Activated T-helper 1 cell treated with anti-CD3 and anti-CD28 coated beads, Interleukin-12 subunit alpha, Interleukin-12 subunit beta, Interleukin-2, Interleukin-4 antibody, amounts not matched to agents 30 ng/mL and 10 ng/mL and 1 ng/mL, durations not matched to agents 14 hours and 24 hours and 36 hours (primary cell): ENCODE measurements at regions of chr14 and their contacts with region 1.

Region 1: DNA sequence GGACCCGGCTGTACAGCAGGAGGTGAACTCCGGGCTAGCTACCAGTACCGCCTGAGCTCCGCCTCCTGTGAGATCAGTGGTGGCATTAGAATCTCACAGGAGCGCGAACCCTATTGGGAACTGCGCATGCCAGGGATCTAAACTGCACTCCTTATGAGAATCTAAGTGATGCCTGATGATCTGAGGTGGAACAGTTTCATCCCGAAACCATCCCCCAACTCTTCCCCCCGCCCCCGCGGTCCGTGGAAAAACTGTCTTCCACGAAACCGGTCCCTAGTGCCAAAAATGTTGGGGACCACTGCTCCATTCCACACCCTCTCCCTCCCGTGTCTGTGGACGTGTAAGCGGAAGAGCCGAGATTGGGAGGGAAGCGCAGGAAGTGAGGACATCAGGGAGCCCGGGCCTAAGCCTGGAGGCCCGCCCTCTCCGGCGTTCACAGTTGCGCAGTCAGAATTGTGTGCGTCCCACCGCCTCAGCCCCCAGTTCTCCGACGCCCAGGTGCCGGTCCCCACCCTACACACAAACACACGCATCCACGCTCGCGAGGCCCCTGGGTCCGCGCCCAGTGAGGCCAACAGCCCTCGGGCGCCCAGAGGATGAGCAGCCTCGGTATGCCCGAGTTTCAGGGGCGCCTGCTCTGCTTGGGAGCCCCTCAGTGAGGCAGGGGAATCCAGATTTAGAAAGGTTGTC is 1.8 kb upstream of the RNASE4 start:
- DNase-seq: peak; percentile 65
- H3K4me3 Mint-ChIP-seq: no peak overlapping the region
- H3K27ac Mint-ChIP-seq: no peak overlapping the region
- H3K4me1 Mint-ChIP-seq: peaks cover 10% of the 10 kb centered on the region
- H3K27me3 Mint-ChIP-seq: no peaks in the 10 kb centered on the region

Region 2: GRCh38 chr14:20332788-20333493 is 349.6 kb before region 1 on chr14 and contains the start of gene CCNB1IP1:
- intact Hi-C with region 1: loop called (anchors 2 kb)
- DNase-seq: peak; percentile 62
- H3K4me3 Mint-ChIP-seq: peak within 1 kb of the TSS; percentile 98
- H3K27ac Mint-ChIP-seq: peak within 1 kb of the TSS; percentile 91
- H3K4me1 Mint-ChIP-seq: peaks cover 59% of the 10 kb centered on the region
- H3K27me3 Mint-ChIP-seq: peaks cover 5% of the 10 kb centered on the region
- total RNA-seq, gene CCNB1IP1: 61.2 and 72.5 TPM in 2 replicates

Region 3: DNA sequence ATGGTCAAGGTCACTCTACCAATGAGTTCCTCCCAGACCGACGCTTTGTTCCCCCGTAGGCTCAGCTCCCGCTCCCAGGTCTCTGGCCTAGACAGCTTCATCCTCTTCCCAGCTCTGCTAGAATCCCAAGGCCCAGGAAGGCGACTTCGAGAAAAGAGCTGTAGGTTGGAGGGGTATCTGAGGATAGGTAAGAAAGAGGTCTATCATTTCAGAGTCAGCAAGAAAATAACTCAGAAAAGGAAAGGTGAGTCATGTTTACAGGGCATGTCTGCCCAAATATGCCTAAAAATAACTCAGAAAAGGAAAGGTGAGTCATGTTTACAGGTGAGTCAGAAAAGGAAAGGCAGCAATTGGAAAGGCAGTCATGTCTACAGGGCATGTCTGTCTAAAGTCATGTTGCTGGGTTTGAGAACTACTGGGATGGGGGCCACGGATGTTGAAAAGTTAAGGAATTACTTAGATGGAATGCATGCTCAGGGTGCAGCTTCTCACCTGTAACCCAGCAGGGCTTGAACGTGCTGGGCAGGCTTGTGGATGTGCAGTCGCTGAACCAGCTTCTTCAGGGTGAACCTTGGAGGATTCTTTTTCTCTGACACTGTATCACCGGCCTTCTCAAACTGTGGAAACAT is 281.5 kb before region 1 on chr14:
- intact Hi-C with region 1: loop called (anchors 1 kb)
- DNase-seq: no peak
- H3K4me3 Mint-ChIP-seq: peak overlapping the region; percentile 53
- H3K27ac Mint-ChIP-seq: peak overlapping the region; percentile 86
- H3K4me1 Mint-ChIP-seq: peaks cover 30% of the 10 kb centered on the region
- H3K27me3 Mint-ChIP-seq: no peaks in the 10 kb centered on the region

Region 4: GRCh38 chr14:20454516-20455354 is 227.8 kb before region 1 on chr14 and contains the starts of genes APEX1 and OSGEP:
- intact Hi-C with region 1: loop called (anchors 2 kb)
- DNase-seq: peak; percentile 97
- H3K4me3 Mint-ChIP-seq: peak within 1 kb of the TSS; percentile 53
- H3K27ac Mint-ChIP-seq: no peak within 1 kb of the TSS
- H3K4me1 Mint-ChIP-seq: peaks cover 11% of the 10 kb centered on the region
- H3K27me3 Mint-ChIP-seq: no peaks in the 10 kb centered on the region
- total RNA-seq, gene APEX1: 236 and 242 TPM in 2 replicates
- total RNA-seq, gene OSGEP: 69.6 and 77.4 TPM in 2 replicates

Region 5: DNA sequence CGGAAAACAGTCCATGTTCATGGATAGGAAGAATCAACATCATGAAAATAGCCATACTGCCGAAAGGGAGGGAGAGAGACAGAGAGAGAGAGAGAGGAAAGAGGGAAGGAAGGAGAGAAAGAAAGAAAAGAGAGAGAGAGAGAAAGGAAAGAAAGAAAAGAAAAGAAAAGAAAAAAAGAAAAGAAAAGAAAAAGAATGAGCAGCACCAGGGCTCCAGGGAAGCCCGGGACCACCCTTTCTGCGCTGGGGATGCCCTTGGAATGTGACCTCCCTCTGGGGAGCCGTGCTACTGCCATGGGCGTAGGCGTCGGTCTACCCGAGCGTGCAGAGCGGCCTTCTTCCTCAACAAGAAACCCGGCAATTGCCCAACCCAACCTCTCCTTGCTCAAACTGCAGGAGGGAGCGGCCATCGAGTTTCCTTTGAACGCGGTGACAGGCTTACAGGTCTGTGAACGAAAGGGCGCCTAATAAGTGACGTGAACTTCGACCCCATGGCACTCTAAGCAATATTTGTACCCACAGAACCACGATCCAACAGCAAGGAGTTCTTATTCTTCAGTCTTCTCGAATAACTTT is 58.0 kb before region 1 on chr14:
- intact Hi-C with region 1: loop called (anchors 1 kb)
- DNase-seq: peak; percentile 28
- H3K4me3 Mint-ChIP-seq: peak overlapping the region; percentile 77
- H3K27ac Mint-ChIP-seq: peak overlapping the region; percentile 87
- H3K4me1 Mint-ChIP-seq: peaks cover 78% of the 10 kb centered on the region
- H3K27me3 Mint-ChIP-seq: peaks cover 51% of the 10 kb centered on the region

Region 6: DNA sequence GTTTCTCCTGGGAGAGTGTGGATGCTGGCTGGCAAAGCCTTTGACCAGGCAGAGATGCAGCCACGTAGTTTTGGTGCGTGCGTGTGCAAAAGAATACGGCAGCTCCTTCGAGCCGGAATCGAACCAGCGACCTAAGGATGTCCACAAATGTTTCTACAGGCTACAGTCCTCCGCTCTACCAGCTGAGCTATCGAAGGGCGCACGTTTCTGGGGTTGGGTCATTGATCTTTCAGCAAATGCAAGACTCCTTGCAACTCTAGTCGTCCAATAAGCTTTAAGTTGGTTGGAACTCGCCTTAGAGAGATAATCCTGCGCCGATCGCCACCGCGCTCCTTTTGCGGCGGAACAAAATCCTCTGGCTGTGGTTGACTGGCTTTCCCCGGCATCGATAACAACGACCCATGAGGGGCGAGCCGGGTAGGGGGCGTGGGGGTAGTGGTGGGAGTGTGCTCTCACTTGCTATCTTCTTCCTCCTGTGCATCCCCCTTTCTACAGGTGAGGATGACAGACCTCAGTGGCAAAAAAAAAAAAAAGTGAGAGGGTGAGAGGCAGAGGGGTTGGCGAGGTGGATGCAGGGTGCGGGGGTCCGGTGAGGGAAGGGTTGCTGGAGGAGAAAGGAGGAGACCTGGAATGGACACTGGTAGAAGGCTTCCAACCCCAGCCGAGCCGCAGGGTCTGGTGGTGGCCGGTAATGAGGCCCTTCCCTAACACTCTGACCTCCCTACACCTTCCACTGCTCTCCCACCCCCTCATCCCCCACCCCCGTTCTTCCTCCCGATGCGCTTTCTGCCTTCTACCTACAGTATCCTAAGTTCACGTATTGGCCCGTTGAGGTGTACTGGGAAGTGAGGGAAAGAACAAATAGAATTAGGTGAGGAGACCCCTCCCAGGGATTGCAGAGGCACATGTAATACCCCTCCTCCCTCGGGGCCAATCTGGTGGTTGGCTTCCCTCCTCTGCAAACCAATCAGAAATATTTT is 29.3 kb before region 1 on chr14:
- intact Hi-C with region 1: loop called (anchors 1 kb)
- DNase-seq: peak; percentile 37
- H3K4me3 Mint-ChIP-seq: peak overlapping the region; percentile 63
- H3K27ac Mint-ChIP-seq: no peak overlapping the region
- H3K4me1 Mint-ChIP-seq: peaks cover 24% of the 10 kb centered on the region
- H3K27me3 Mint-ChIP-seq: peaks cover 72% of the 10 kb centered on the region

Region 7: GRCh38 chr14:20970983-20971704 is 288.6 kb after region 1 on chr14:
- intact Hi-C with region 1: loop called (anchors 1 kb)
- DNase-seq: peak; percentile 72
- H3K4me3 Mint-ChIP-seq: peak overlapping the region; percentile 93
- H3K27ac Mint-ChIP-seq: no peak overlapping the region
- H3K4me1 Mint-ChIP-seq: peaks cover 15% of the 10 kb centered on the region
- H3K27me3 Mint-ChIP-seq: peaks cover 35% of the 10 kb centered on the region